ENCODE measurements at regions of chr6 and their contacts with region 1.

Region 1: GRCh38 chr6:71288228-71289001 is at the start of gene OGFRL1:
- DNase-seq: peak; percentile 80
- ATAC-seq: peak; percentile 81
- H3K4me3 Mint-ChIP-seq: peak within 1 kb of the TSS; percentile 85
- H3K27ac Mint-ChIP-seq: peak within 1 kb of the TSS; percentile 93
- H3K4me1 Mint-ChIP-seq: peaks cover 49% of the 10 kb centered on the region
- H3K27me3 Mint-ChIP-seq: no peaks in the 10 kb centered on the region
- CTCF ChIP-seq: no peak
- total RNA-seq, gene OGFRL1: 17.1 and 18.4 TPM in 2 replicates

Region 2: GRCh38 chr6:70413114-70413991 is 875.1 kb before region 1 on chr6 and contains the start of gene FAM135A:
- CTCF ChIA-PET with region 1: no interaction called
- POLR2A ChIA-PET with region 1: interaction called, 5 read pairs
- intact Hi-C with region 1: loop called (anchors 1 kb)
- DNase-seq: peak; percentile 96
- ATAC-seq: peak; percentile 98
- H3K4me3 Mint-ChIP-seq: peak within 1 kb of the TSS; percentile 92
- H3K27ac Mint-ChIP-seq: peak within 1 kb of the TSS; percentile 86
- H3K4me1 Mint-ChIP-seq: peaks cover 23% of the 10 kb centered on the region
- H3K27me3 Mint-ChIP-seq: no peaks in the 10 kb centered on the region
- CTCF ChIP-seq: no peak
- total RNA-seq, gene FAM135A: 15.6 and 18.2 TPM in 2 replicates

Region 3: DNA sequence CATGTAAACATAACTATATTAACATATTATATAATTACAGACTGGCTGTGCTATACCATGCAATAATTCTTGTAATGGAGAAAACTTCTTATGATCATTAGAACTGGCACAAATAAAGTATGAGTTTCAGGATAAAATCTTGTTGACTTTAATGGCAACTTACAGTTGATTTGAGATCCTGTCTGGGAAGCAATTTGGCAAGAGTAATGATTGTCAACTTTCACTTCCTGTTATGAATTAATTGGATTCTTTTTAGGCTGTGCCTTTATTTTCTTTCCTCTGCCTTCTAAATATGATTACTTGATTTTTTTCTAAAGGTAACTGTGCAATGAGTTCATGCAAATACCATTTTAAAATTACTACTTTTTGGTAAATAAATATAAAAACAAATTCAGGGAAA is 173.4 kb before region 1 on chr6:
- CTCF ChIA-PET with region 1: no interaction called
- POLR2A ChIA-PET with region 1: no interaction called
- intact Hi-C with region 1: no loop called
- DNase-seq: no peak
- ATAC-seq: no peak
- H3K4me3 Mint-ChIP-seq: no peak overlapping the region
- H3K27ac Mint-ChIP-seq: no peak overlapping the region
- H3K4me1 Mint-ChIP-seq: no peaks in the 10 kb centered on the region
- H3K27me3 Mint-ChIP-seq: peaks cover 7% of the 10 kb centered on the region
- CTCF ChIP-seq: no peak

Region 4: GRCh38 chr6:71190809-71191208 is 97.6 kb before region 1 on chr6:
- CTCF ChIA-PET with region 1: interaction called, 30 read pairs
- POLR2A ChIA-PET with region 1: interaction called, 6 read pairs
- intact Hi-C with region 1: loop called (anchors 1 kb)
- DNase-seq: no peak
- ATAC-seq: no peak
- H3K4me3 Mint-ChIP-seq: no peak overlapping the region
- H3K27ac Mint-ChIP-seq: no peak overlapping the region
- H3K4me1 Mint-ChIP-seq: no peaks in the 10 kb centered on the region
- H3K27me3 Mint-ChIP-seq: peaks cover 1% of the 10 kb centered on the region
- CTCF ChIP-seq: no peak

Region 5: GRCh38 chr6:71248306-71248765 is 40.1 kb before region 1 on chr6:
- CTCF ChIA-PET with region 1: interaction called, 7 read pairs
- POLR2A ChIA-PET with region 1: interaction called, 67 read pairs
- intact Hi-C with region 1: loop called (anchors 1 kb)
- DNase-seq: no peak
- ATAC-seq: peak; percentile 79
- H3K4me3 Mint-ChIP-seq: peak overlapping the region; percentile 8
- H3K27ac Mint-ChIP-seq: peak overlapping the region; percentile 80
- H3K4me1 Mint-ChIP-seq: peaks cover 51% of the 10 kb centered on the region
- H3K27me3 Mint-ChIP-seq: no peaks in the 10 kb centered on the region
- CTCF ChIP-seq: no peak

Region 6: DNA sequence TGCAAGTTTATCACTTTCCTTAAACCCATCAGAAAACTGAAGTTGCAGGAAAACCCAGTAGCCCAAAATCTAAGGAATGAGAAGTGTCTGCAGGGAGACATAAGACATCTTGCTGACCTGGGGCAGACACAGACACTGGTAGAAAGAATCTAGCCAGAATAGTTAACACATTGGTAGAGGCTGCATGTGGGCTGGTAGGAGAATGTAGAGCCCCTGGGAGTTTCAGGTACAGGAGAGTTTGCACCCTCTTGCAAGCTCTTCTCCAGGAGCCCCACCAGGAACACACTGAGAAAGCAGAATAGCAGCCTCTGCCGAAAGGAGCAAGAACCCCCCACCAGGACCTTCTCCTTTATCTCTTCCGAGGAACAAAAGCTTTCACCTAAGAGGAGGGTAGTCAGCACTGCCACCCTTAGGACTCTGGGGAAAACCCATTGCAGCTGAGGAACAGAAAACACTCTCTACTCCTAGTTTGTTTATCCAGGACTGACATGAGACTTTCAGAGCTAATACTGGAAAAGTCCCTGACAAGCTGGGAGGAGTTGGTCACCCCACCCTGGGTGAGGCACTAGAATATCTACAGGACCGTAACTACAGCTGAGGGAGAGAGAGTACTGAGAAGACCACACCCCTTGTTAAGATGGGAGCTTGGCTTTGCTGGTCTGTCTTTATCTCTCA is 10.4 kb before region 1 on chr6:
- CTCF ChIA-PET with region 1: interaction called, 3 read pairs
- POLR2A ChIA-PET with region 1: interaction called, 14 read pairs
- intact Hi-C with region 1: no loop called
- DNase-seq: no peak
- ATAC-seq: peak; percentile 21
- H3K4me3 Mint-ChIP-seq: no peak overlapping the region
- H3K27ac Mint-ChIP-seq: no peak overlapping the region
- H3K4me1 Mint-ChIP-seq: peaks cover 11% of the 10 kb centered on the region
- H3K27me3 Mint-ChIP-seq: no peaks in the 10 kb centered on the region
- CTCF ChIP-seq: no peak

Region 7: DNA sequence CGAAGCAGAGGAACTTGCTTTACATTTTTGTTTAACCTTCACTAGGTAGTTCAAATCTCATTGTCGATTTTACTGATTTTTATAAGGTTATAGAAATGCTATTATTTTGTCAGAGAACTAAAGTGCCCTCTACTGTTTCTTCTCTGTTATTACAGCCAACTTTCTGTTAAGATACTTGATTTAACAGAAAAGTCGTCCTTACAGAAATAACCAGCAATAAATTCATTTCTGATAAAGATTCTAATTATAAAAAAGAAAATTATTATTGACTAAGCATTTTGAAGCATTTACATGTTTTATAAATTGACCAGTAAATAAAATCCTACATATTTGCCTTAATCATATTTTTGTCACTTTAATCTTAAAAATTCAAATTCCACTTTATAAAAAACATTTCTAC is 61.0 kb after region 1 on chr6:
- CTCF ChIA-PET with region 1: interaction called, 3 read pairs
- POLR2A ChIA-PET with region 1: interaction called, 3 read pairs
- intact Hi-C with region 1: loop called (anchors 1 kb)
- DNase-seq: no peak
- ATAC-seq: no peak
- H3K4me3 Mint-ChIP-seq: no peak overlapping the region
- H3K27ac Mint-ChIP-seq: no peak overlapping the region
- H3K4me1 Mint-ChIP-seq: peaks cover 19% of the 10 kb centered on the region
- H3K27me3 Mint-ChIP-seq: peaks cover under 1% of the 10 kb centered on the region
- CTCF ChIP-seq: peak; percentile 54